CD4-positive, alpha-beta T cell (primary cell): ENCODE measurements at regions of chr9 and their contacts with region 1.

Region 1: DNA sequence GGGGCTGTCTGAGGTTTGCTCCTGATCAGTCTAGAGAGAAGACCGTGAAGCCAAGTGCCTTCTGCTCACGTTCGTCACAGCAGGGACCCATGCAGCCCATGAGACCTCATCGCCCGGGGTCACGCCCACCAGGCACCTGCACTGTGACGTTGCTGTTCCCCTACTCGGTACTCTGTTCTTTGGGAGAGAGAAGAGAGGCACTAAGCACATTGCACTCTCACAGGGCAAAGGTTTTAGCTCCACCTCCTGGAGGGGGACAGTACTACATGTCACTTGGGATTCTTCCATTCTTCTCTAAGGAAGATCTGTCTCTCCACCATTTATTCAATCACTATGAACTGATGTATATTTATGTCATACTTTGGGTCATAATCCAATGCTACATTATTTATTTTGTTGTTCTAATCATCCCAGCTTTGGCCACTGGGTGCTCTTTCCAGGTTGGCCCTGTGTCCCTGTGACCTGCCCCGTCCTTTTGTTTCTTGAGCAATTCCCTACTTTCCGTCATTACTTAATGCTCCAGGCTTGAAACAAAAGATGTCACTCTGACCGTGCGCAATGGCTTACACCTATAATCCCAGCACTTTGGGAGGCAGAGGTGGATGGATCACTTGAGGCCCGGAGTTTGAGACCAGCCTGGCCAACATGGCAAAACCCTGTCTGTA is 31.4 kb upstream of the BRD3 start:
- DNase-seq: peak; percentile 32 to 80 (median 49)
- ATAC-seq: peak; percentile 97
- H3K4me3 ChIP-seq: no peak overlapping the region
- H3K4me3 Mint-ChIP-seq: no peak overlapping the region
- H3K27ac ChIP-seq: no peak overlapping the region
- H3K27ac Mint-ChIP-seq: no peak overlapping the region
- H3K4me1 ChIP-seq: peaks cover 3% of the 10 kb centered on the region
- H3K4me1 Mint-ChIP-seq: no peaks in the 10 kb centered on the region
- H3K27me3 ChIP-seq: peaks cover 0 to 2% of the 10 kb centered on the region in 2 experiments
- H3K27me3 Mint-ChIP-seq: peaks cover 44% of the 10 kb centered on the region
- CTCF ChIP-seq: peak; percentile 79

Region 2: DNA sequence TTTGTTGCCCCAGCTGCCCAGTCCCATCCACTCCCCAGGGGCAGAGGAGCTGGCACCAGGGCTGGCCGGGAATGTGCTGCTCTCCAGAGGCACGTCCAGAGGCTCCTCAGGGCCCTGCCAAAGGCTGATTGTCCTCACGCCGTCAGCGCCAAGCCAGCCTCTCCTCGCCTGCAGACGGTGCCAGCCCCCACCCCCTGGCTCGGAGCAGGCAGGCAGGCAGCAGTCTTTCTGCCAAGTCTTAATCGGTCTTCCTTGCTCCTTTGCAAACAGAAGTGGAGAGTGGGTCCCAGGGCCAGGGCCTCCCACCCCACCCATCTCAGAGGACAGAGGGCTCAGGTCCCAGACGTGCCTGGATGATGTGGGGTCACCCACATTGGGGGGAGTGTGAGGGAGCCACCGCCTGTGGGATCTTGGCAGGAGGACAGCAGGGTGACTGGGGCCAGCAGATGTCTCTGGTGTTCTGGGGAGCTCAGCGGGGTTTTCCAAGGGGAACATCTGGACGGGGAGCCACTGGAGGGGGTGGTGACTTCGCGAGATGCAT is 526.4 kb before region 1 on chr9:
- CTCF ChIA-PET with region 1: no interaction called
- POLR2A ChIA-PET with region 1: no interaction called
- intact Hi-C with region 1: no loop called
- DNase-seq: no peak
- ATAC-seq: no peak
- H3K4me3 ChIP-seq: no peak overlapping the region
- H3K4me3 Mint-ChIP-seq: no peak overlapping the region
- H3K27ac ChIP-seq: no peak overlapping the region
- H3K27ac Mint-ChIP-seq: no peak overlapping the region
- H3K4me1 ChIP-seq: no peaks in the 10 kb centered on the region
- H3K4me1 Mint-ChIP-seq: peaks cover 8% of the 10 kb centered on the region
- H3K27me3 ChIP-seq: peaks cover 0 to 10% of the 10 kb centered on the region in 2 experiments
- H3K27me3 Mint-ChIP-seq: peaks cover 23% of the 10 kb centered on the region
- CTCF ChIP-seq: no peak

Region 3: DNA sequence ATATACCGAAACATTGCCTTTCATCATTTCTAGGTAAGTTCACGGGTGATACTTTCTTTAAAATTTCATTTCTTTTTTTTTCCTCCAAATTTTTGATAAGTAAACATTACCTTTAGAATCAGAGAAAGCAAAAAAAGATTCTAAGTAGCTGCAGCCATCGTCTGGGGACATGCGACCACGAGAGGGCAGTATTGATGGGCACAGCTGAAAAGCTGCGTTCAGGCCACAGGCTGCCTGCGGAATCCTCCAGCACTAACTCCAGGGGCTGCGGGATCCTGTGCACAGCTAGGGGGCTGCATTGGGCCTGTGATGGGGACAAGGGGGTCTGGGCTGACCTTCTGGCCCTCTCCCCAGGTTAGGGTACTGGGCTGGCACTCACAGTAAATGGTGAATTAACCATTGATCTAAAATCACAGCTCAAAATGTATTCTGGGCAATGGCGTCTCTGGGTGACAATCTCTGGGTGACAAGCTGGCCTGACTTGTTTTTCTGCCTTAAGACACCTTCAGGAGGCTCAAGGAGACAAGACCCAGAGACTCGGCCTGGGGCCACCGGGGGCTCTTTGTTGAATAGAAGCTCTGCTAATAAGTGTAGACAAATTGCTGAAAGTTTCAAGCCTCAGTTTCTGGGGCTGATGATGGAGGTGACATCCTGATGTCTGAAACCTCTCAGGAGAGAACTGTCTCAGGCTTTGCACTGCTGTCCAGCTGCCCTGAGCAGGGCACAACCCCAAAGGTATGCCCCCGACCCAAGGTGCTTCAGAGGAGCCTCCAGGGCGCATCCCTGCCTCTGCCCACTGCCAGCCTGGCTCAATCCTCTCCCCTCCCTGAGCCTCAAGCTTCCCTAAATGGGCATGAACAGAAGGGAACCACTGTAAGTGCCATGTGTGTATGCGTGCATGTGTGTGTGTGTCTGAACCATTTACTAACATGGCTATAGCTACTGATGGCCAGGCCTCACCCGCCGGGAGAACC is 316.8 kb before region 1 on chr9:
- CTCF ChIA-PET with region 1: interaction called, 5 read pairs
- POLR2A ChIA-PET with region 1: no interaction called
- intact Hi-C with region 1: loop called in 1 of 2 experiments (anchors 1 kb)
- DNase-seq: peak; percentile 47 to 80 (median 60)
- ATAC-seq: peak; percentile 66
- H3K4me3 ChIP-seq: no peak overlapping the region
- H3K4me3 Mint-ChIP-seq: no peak overlapping the region
- H3K27ac ChIP-seq: no peak overlapping the region
- H3K27ac Mint-ChIP-seq: no peak overlapping the region
- H3K4me1 ChIP-seq: peaks cover 3% of the 10 kb centered on the region
- H3K4me1 Mint-ChIP-seq: no peaks in the 10 kb centered on the region
- H3K27me3 ChIP-seq: no peaks in the 10 kb centered on the region
- H3K27me3 Mint-ChIP-seq: no peaks in the 10 kb centered on the region
- CTCF ChIP-seq: peak; percentile 77

Region 4: GRCh38 chr9:133792721-133793470 is 306.4 kb before region 1 on chr9:
- CTCF ChIA-PET with region 1: no interaction called
- POLR2A ChIA-PET with region 1: no interaction called
- intact Hi-C with region 1: loop called (anchors 1 kb)
- DNase-seq: peak; percentile 13 to 75 (median 37)
- ATAC-seq: peak; percentile 57
- H3K4me3 ChIP-seq: no peak overlapping the region
- H3K4me3 Mint-ChIP-seq: no peak overlapping the region
- H3K27ac ChIP-seq: no peak overlapping the region
- H3K27ac Mint-ChIP-seq: no peak overlapping the region
- H3K4me1 ChIP-seq: peaks cover 10% of the 10 kb centered on the region
- H3K4me1 Mint-ChIP-seq: no peaks in the 10 kb centered on the region
- H3K27me3 ChIP-seq: no peaks in the 10 kb centered on the region
- H3K27me3 Mint-ChIP-seq: no peaks in the 10 kb centered on the region
- CTCF ChIP-seq: peak; percentile 77

Region 5: DNA sequence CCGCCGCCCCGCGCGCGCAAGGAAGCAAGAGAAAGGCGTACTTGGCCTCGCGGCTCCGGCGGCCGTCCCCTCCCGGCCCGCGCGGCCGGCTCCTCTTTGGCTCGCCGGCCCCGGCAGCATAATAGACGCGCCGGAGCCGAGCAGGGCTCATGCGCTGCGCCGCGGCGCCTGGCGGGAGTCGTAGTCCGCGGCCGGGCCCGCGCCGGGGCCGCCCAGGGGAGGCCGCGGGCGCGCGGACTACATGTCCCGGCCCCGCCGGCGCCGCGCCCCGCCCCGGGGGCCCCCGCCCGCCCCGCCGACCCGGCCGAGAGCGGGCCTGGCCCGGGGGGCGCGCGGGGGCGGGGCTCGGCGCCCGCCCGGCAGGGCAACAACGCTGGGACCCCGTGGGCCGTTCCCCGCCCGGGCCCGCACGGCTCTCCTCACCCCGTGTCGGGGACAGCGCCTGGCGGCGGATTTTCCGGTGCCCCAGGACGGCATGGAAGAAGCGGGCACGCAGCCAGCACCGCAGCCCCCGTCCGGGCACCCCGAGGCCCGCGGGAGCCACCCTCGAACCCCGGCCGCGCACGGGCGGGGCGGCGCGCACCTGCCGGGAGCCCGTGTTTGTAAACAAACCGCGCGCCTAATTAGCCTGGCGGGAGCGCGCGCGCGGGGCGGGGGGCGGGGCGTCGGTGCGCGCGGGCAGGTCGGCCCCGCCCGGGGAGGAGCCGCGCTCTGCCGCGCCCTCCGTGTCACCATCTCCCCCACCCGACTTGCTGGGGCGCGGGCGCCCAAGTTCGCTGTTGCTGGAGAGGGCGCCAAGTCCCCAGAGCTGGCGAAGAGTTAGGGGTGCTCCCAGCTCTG is 31.1 kb before region 1 on chr9 and contains the start of gene BRD3:
- CTCF ChIA-PET with region 1: interaction called, 4 read pairs
- POLR2A ChIA-PET with region 1: no interaction called
- intact Hi-C with region 1: loop called (anchors 1 kb)
- DNase-seq: peak; percentile 63 to 96 (median 78)
- ATAC-seq: peak; percentile 76
- H3K4me3 ChIP-seq: peak within 1 kb of the TSS; percentile 79
- H3K4me3 Mint-ChIP-seq: peak within 1 kb of the TSS; percentile 97
- H3K27ac ChIP-seq: peak within 1 kb of the TSS; percentile 79 to 84
- H3K27ac Mint-ChIP-seq: peak within 1 kb of the TSS; percentile 98
- H3K4me1 ChIP-seq: peaks cover 47% of the 10 kb centered on the region
- H3K4me1 Mint-ChIP-seq: peaks cover 37% of the 10 kb centered on the region
- H3K27me3 ChIP-seq: peaks cover 9 to 15% of the 10 kb centered on the region in 2 experiments
- H3K27me3 Mint-ChIP-seq: peaks cover 22% of the 10 kb centered on the region
- CTCF ChIP-seq: no peak
- total RNA-seq, gene BRD3: 26.7 to 29.0 TPM

Region 6: GRCh38 chr9:134083451-134083850 is 15.8 kb before region 1 on chr9:
- CTCF ChIA-PET with region 1: no interaction called
- POLR2A ChIA-PET with region 1: no interaction called
- intact Hi-C with region 1: no loop called
- DNase-seq: no peak
- ATAC-seq: no peak
- H3K4me3 ChIP-seq: no peak overlapping the region
- H3K4me3 Mint-ChIP-seq: no peak overlapping the region
- H3K27ac ChIP-seq: no peak overlapping the region
- H3K27ac Mint-ChIP-seq: no peak overlapping the region
- H3K4me1 ChIP-seq: no peaks in the 10 kb centered on the region
- H3K4me1 Mint-ChIP-seq: no peaks in the 10 kb centered on the region
- H3K27me3 ChIP-seq: peaks cover 0 to 4% of the 10 kb centered on the region in 2 experiments
- H3K27me3 Mint-ChIP-seq: peaks cover 16% of the 10 kb centered on the region
- CTCF ChIP-seq: no peak

Region 7: DNA sequence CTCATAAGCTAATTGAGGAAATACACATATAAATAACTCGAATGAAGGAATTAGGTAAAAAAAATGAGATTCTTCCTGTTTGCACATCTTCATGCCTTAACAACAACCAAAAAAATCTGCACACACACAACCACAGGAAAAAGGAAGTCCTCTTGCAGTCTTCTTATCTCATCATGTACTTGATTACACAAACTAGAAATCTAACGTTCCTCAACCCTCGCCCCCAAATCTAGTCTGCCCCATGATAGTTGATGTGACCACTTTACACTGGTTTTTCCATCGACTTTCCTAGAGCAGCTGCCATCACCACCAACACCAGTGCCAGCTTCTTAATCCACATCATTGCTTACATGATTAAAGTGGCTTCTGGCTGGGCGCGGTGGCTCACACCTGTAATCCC is 96.3 kb after region 1 on chr9:
- CTCF ChIA-PET with region 1: no interaction called
- POLR2A ChIA-PET with region 1: no interaction called
- intact Hi-C with region 1: no loop called
- DNase-seq: peak in 3 of 14 experiments; percentile 5 to 71 (median 27)
- ATAC-seq: peak; percentile 17
- H3K4me3 ChIP-seq: no peak overlapping the region
- H3K4me3 Mint-ChIP-seq: peak overlapping the region; percentile 8
- H3K27ac ChIP-seq: no peak overlapping the region
- H3K27ac Mint-ChIP-seq: peak overlapping the region; percentile 50
- H3K4me1 ChIP-seq: peaks cover 33% of the 10 kb centered on the region
- H3K4me1 Mint-ChIP-seq: peaks cover 24% of the 10 kb centered on the region
- H3K27me3 ChIP-seq: no peaks in the 10 kb centered on the region
- H3K27me3 Mint-ChIP-seq: no peaks in the 10 kb centered on the region
- CTCF ChIP-seq: no peak

Region 8: DNA sequence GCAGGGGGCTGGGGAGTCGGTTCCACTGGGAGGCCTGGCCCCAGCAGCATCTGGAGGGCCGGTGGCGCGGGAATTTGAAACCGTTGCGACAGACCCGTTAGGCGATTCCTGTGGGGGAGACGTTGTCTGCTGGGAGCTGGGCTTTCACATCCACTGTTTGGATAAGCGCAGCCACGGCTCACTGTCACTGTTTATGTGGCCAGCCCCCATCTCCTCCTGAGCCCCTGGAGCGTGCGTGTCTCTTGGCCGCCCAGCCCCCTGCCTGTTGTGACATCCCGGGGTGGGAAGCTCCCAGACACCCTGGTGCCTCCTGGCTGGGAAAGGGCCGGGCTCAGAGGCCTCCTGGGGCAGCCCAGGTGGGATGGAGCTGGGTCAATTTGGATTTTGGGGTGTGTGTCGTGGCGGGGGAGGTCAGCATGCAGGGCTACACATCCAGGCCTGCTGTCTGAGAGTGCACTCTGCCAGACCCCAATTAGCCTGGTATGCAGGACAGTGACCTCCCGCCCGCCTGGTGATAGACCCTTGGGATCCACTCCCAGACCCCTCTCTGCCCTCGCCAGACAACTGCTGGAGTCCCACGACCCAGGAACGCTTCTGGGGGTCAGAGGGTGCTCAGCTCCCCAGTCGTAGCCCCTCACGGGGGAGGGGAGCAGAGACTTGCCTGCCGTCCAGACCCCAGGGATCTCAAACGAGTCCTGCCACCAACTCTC is 127.1 kb after region 1 on chr9:
- CTCF ChIA-PET with region 1: no interaction called
- POLR2A ChIA-PET with region 1: no interaction called
- intact Hi-C with region 1: no loop called
- DNase-seq: no peak
- ATAC-seq: no peak
- H3K4me3 ChIP-seq: no peak overlapping the region
- H3K4me3 Mint-ChIP-seq: no peak overlapping the region
- H3K27ac ChIP-seq: no peak overlapping the region
- H3K27ac Mint-ChIP-seq: no peak overlapping the region
- H3K4me1 ChIP-seq: no peaks in the 10 kb centered on the region
- H3K4me1 Mint-ChIP-seq: no peaks in the 10 kb centered on the region
- H3K27me3 ChIP-seq: no peaks in the 10 kb centered on the region
- H3K27me3 Mint-ChIP-seq: no peaks in the 10 kb centered on the region
- CTCF ChIP-seq: no peak